Breast epithelium (tissue), 4 donors: ENCODE measurements at regions of chr5 and their contacts with region 1.

Region 1: GRCh38 chr5:80654391-80655230 is at the starts of genes DHFR and MSH3:
- DNase-seq: peak; percentile 66 to 86
- H3K4me3 ChIP-seq: peak within 1 kb of the TSS; percentile 86 to 94 (median 90)
- H3K27ac ChIP-seq: peak within 1 kb of the TSS; percentile 82 to 93
- H3K4me1 ChIP-seq: peaks cover 3 to 7% of the 10 kb centered on the region in 2 donors
- H3K27me3 ChIP-seq: no peaks in the 10 kb centered on the region
- CTCF ChIP-seq: peak in 1 of 3 donors; percentile 10
- POLR2A ChIP-seq: no peak
- total RNA-seq, gene DHFR: 6.9 to 22.4 (median 10.8) TPM
- total RNA-seq, gene MSH3: 20.0 to 21.4 (median 21.3) TPM

Region 2: DNA sequence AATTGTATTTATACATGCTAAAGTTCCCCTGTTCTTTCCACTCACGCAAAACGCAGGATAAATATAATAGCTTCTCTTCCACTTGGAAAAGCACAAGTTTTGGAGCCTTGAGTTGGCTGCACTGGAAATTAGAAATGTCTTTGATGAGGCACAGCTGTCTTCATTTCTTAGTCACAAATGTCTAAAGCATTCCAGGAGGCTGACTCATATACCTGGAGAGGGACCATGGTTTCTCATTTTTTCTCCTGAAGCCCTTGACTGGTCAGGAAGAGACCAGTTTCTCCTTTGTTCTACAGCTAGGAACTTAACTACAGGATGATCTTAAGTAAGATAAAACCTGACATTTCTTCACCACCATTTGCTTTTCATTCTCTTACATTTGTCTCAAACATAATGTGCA is 679.7 kb before region 1 on chr5:
- intact Hi-C with region 1: loop called (anchors 5 kb)
- DNase-seq: no peak
- H3K4me3 ChIP-seq: no peak overlapping the region
- H3K27ac ChIP-seq: no peak overlapping the region
- H3K4me1 ChIP-seq: no peaks in the 10 kb centered on the region
- H3K27me3 ChIP-seq: no peaks in the 10 kb centered on the region
- CTCF ChIP-seq: no peak
- POLR2A ChIP-seq: no peak